ENCODE measurements at regions of chr1 and their contacts with region 1.

Region 1: DNA sequence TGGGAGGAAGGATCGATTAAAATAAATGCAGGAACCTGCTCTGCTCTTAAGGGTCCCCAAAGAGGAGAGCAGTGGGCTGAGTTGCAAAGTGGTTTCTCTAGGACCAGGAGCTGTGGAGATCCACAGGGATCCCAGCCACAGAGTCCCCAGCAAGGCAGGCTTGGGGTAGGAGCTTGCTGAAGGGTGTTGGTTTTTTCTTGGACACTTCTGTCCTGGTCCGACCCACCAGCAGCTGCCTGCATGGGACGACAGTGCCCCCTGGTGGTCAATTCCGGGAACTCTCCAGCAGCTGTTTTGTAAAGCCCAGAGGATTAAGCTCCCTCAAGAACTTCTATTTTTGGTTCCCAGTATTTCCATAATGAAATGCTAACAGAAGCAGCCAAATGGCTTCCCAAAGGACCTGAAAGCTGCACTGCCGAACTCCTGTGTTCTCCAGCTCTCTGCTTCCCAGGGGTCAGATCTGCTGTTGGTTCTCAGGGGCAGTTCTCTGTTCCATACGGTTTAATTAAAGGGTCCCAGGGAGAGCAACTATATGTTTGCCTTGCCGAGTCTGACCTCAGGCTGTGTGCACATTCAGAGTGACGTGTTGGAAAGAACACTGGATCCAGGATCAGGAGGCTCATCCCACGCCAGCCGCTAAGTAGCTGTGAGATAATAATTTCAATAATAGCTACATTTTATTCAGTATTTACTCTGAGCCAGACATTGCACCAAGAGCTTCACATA is 23.2 kb downstream of the NENF start:
- DNase-seq: peak; percentile 80 to 82
- ATAC-seq: peak; percentile 84 to 91
- H3K4me3 ChIP-seq: no peak overlapping the region
- H3K27ac ChIP-seq: no peak overlapping the region
- H3K4me1 ChIP-seq: no peaks in the 10 kb centered on the region
- CTCF ChIP-seq: peak; percentile 97
- EP300 ChIP-seq: no peak
- POLR2A ChIP-seq: no peak
- RAD21 ChIP-seq: peak; percentile 96 to 98

Region 2: GRCh38 chr1:212035123-212035834 is 420.7 kb before region 1 on chr1 and contains the starts of genes DTL and INTS7:
- CTCF ChIA-PET with region 1: interaction called, 35 read pairs
- POLR2A ChIA-PET with region 1: interaction called, 4 read pairs
- DNase-seq: peak; percentile 99
- ATAC-seq: peak; percentile 87 to 92
- H3K4me3 ChIP-seq: peak within 1 kb of the TSS; percentile 65
- H3K27ac ChIP-seq: peak within 1 kb of the TSS; percentile 85 to 90
- H3K4me1 ChIP-seq: peaks cover 72% of the 10 kb centered on the region
- CTCF ChIP-seq: peak; percentile 94
- EP300 ChIP-seq: no peak
- POLR2A ChIP-seq: peak; percentile 73
- RAD21 ChIP-seq: peak in 1 of 2 experiments; percentile 30; a peak in 2 of 5 replicates
- polyA plus RNA-seq, gene DTL: 28.5 and 30.2 TPM in 2 replicates
- polyA plus RNA-seq, gene INTS7: 47.2 and 61.8 TPM in 2 replicates

Region 3: GRCh38 chr1:212070720-212071302 is 385.2 kb before region 1 on chr1:
- CTCF ChIA-PET with region 1: interaction called, 230 read pairs
- POLR2A ChIA-PET with region 1: interaction called, 8 read pairs
- DNase-seq: peak; percentile 14 to 43
- ATAC-seq: peak; percentile 74 to 80; a peak in 4 of 6 replicates
- H3K4me3 ChIP-seq: no peak overlapping the region
- H3K27ac ChIP-seq: no peak overlapping the region
- H3K4me1 ChIP-seq: no peaks in the 10 kb centered on the region
- CTCF ChIP-seq: peak; percentile 80
- EP300 ChIP-seq: no peak
- POLR2A ChIP-seq: no peak
- RAD21 ChIP-seq: peak; percentile 78 to 88

Region 4: DNA sequence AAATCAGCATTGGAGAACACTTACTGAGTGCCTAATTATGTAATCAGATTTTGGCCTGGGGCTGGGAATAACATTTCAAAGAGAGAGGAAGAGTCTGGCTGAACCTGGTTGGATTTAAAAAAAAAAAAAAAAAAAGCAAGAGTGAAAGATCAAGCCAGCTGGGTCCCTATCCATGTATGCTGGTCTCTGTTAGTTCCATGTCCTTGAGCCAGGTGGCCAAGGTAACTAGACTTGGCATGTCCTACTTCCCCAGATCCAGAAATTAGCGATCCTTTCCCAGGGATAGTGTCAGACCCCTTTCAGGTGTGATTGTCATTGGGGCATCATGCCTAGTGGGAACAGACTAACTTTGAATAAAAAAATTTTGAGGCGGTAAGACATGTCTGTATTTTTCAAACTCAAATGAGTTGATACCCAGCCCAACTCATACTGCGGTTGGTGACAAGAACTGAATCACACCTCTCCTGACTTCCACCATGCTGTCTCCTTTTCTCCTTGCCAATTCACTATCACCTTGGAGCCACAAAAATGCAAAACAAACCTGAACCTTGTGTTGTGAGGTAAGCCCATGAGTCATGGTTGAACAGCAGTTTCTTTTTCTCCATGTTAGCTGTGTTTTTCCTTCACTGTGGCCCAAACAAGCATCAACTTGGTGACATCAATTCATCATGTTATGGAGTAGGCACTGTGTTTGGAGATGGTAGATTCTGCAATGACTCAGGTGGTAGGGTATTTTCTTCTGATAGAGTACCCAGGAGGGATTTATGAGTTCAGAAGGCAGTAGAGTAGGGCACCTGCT is 195.2 kb before region 1 on chr1:
- CTCF ChIA-PET with region 1: no interaction called
- POLR2A ChIA-PET with region 1: no interaction called
- DNase-seq: peak in 1 of 2 experiments; percentile 29
- ATAC-seq: peak; percentile 45 to 63; a peak in 4 of 6 replicates
- H3K4me3 ChIP-seq: no peak overlapping the region
- H3K27ac ChIP-seq: no peak overlapping the region
- H3K4me1 ChIP-seq: no peaks in the 10 kb centered on the region
- CTCF ChIP-seq: no peak
- EP300 ChIP-seq: no peak
- POLR2A ChIP-seq: no peak
- RAD21 ChIP-seq: no peak

Region 5: DNA sequence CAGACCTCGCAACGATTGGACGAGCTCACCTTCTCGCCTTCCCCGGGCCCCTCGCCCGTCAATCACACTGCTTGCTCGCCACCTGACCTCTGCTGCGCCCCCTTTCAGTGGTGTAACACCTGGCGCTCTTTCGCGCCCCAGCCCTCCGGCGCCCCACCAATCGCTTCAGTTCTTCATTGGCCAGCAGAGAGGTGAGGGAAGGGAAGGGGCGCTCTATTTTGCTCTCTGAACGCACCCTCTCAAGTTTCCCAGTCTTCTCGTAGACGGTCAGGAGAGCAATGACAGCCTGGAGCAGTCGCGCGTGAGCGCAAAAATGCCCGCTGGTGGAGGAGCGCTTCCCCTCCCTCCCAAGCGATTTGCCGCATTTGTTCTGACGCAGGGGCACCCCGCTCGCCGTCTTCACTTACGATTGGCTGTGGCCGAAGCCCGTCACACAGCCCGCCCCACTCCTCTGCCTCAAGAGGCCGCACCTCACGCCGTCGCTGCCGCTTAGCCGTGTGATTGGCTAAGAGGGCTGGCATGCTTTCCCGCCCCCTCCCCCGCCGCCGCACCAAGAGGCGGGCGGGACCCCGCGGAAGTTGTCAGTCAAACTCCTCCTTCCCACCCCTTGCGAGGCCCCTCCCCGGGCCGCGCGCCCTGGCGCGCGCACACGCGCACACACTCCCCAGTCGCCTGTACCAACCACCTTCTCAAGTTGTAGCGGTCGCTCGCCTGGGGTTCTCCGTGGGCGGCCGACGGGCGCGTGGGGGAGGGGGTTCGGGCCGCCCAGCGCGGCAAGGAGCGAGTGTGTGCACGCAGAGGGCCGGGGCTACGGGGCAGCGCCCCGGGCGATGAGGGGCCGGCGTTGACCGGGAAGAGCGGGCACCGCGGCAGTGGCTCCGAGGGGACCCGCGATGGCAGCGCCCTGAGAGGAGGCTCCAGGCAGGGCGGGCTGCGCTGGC is 171.0 kb before region 1 on chr1 and contains the start of gene PPP2R5A:
- CTCF ChIA-PET with region 1: interaction called, 10 read pairs
- POLR2A ChIA-PET with region 1: no interaction called
- DNase-seq: peak; percentile 98 to 100
- ATAC-seq: peak; percentile 89 to 96
- H3K4me3 ChIP-seq: peak within 1 kb of the TSS; percentile 82
- H3K27ac ChIP-seq: peak within 1 kb of the TSS; percentile 93 to 96
- H3K4me1 ChIP-seq: peaks cover 32% of the 10 kb centered on the region
- CTCF ChIP-seq: peak; percentile 46
- EP300 ChIP-seq: no peak; a peak in 1 of 5 replicates
- POLR2A ChIP-seq: peak; percentile 83
- RAD21 ChIP-seq: no peak; a peak in 1 of 5 replicates
- polyA plus RNA-seq, gene PPP2R5A: 33.6 and 37.6 TPM in 2 replicates

Region 6: GRCh38 chr1:212381397-212382035 is 74.5 kb before region 1 on chr1:
- CTCF ChIA-PET with region 1: interaction called, 10 read pairs
- POLR2A ChIA-PET with region 1: no interaction called
- DNase-seq: no peak
- ATAC-seq: no peak
- H3K4me3 ChIP-seq: no peak overlapping the region
- H3K27ac ChIP-seq: no peak overlapping the region
- H3K4me1 ChIP-seq: no peaks in the 10 kb centered on the region
- CTCF ChIP-seq: no peak
- EP300 ChIP-seq: no peak
- POLR2A ChIP-seq: no peak
- RAD21 ChIP-seq: no peak

Region 7: DNA sequence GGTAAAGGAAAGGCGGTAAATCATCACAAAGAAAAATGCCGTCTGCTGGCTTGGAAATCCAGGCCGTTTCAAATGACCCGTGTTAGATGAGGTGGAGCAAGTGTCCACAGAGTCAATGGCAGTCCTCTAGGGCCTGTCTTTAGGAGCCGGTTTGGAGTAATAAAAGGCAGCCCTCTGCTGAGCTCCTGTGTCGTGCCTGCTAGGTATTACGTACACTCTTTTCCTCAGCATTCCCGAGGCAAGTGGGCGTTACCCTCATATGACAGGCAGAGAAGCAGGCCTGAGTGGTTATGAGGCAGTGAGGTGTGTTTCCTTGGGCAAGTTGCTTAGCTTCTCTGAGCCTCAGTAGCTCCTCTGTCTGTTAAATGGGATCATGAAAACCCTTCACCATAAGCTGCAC is 15.5 kb before region 1 on chr1:
- CTCF ChIA-PET with region 1: interaction called, 48 read pairs
- POLR2A ChIA-PET with region 1: no interaction called
- DNase-seq: no peak
- ATAC-seq: no peak
- H3K4me3 ChIP-seq: no peak overlapping the region
- H3K27ac ChIP-seq: no peak overlapping the region
- H3K4me1 ChIP-seq: peaks cover 6% of the 10 kb centered on the region; the same call in 1 of the 3 replicates
- CTCF ChIP-seq: no peak
- EP300 ChIP-seq: no peak
- POLR2A ChIP-seq: no peak
- RAD21 ChIP-seq: no peak

Region 8: GRCh38 chr1:212485895-212486590 is 30.1 kb after region 1 on chr1:
- CTCF ChIA-PET with region 1: no interaction called
- POLR2A ChIA-PET with region 1: no interaction called
- DNase-seq: peak; percentile 76 to 97
- ATAC-seq: peak; percentile 73 to 84
- H3K4me3 ChIP-seq: no peak overlapping the region; the same call in 2 of the 3 replicates
- H3K27ac ChIP-seq: peak overlapping the region; percentile 75 to 86
- H3K4me1 ChIP-seq: peaks cover 93% of the 10 kb centered on the region
- CTCF ChIP-seq: no peak
- EP300 ChIP-seq: peak; percentile 62 to 72; a peak in 3 of 5 replicates
- POLR2A ChIP-seq: no peak
- RAD21 ChIP-seq: no peak; a peak in 1 of 5 replicates

Region 9: GRCh38 chr1:212994926-212995325 is 539.0 kb after region 1 on chr1:
- CTCF ChIA-PET with region 1: interaction called, 14 read pairs
- POLR2A ChIA-PET with region 1: no interaction called
- DNase-seq: no peak
- ATAC-seq: no peak
- H3K4me3 ChIP-seq: no peak overlapping the region
- H3K27ac ChIP-seq: peak overlapping the region; percentile 49; a peak in 3 of 6 replicates
- H3K4me1 ChIP-seq: peaks cover 18% of the 10 kb centered on the region
- CTCF ChIP-seq: no peak
- EP300 ChIP-seq: no peak
- POLR2A ChIP-seq: no peak
- RAD21 ChIP-seq: no peak

Measured in A549 (cell line).